ENCODE measurements at regions of chr1 and their contacts with region 1.

Region 1: GRCh38 chr1:201481761-201482493 is 12.9 kb upstream of the PHLDA3 start:
- DNase-seq: peak; percentile 97
- ATAC-seq: peak; percentile 72
- H3K4me3 Mint-ChIP-seq: peak overlapping the region; percentile 84
- H3K27ac Mint-ChIP-seq: no peak overlapping the region
- H3K4me1 Mint-ChIP-seq: peaks cover 29% of the 10 kb centered on the region
- H3K27me3 Mint-ChIP-seq: peaks cover 4% of the 10 kb centered on the region
- CTCF ChIP-seq: peak; percentile 88

Region 2: GRCh38 chr1:201361652-201362504 is 120.0 kb before region 1 on chr1:
- CTCF ChIA-PET with region 1: interaction called, 11 read pairs
- POLR2A ChIA-PET with region 1: no interaction called
- DNase-seq: peak; percentile 85
- ATAC-seq: peak; percentile 89
- H3K4me3 Mint-ChIP-seq: no peak overlapping the region
- H3K27ac Mint-ChIP-seq: no peak overlapping the region
- H3K4me1 Mint-ChIP-seq: peaks cover 18% of the 10 kb centered on the region
- H3K27me3 Mint-ChIP-seq: peaks cover 3% of the 10 kb centered on the region; the same call in 1 of the 2 replicates
- CTCF ChIP-seq: peak; percentile 90

Region 3: DNA sequence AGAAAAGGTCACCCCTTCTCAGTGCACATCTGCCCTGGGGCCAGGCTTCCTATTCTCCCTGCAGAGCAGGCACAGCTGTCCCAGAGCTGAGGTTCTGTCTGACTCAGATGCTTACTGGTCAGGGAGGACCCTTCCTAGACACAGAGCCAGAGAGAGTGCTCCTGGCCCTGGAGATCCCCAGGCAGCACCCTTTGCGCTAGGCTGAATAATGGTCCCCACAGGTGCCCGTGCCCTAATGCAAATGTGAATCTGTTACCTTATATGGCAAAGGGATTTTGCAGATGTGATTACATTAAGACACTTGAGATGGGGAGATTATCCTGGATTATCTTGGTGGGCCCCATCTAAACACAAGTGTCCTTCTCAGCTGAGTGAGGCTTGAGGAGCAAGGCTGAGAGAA is 57.8 kb before region 1 on chr1:
- CTCF ChIA-PET with region 1: no interaction called
- POLR2A ChIA-PET with region 1: no interaction called
- DNase-seq: no peak
- ATAC-seq: no peak
- H3K4me3 Mint-ChIP-seq: no peak overlapping the region
- H3K27ac Mint-ChIP-seq: no peak overlapping the region
- H3K4me1 Mint-ChIP-seq: peaks cover 9% of the 10 kb centered on the region
- H3K27me3 Mint-ChIP-seq: no peaks in the 10 kb centered on the region
- CTCF ChIP-seq: no peak

Region 4: GRCh38 chr1:201436393-201436792 is 45.5 kb before region 1 on chr1:
- CTCF ChIA-PET with region 1: interaction called, 195 read pairs
- POLR2A ChIA-PET with region 1: interaction called, 10 read pairs
- DNase-seq: peak; percentile 72
- ATAC-seq: peak; percentile 97
- H3K4me3 Mint-ChIP-seq: no peak overlapping the region; the same call in 1 of the 2 replicates
- H3K27ac Mint-ChIP-seq: no peak overlapping the region; the same call in 1 of the 2 replicates
- H3K4me1 Mint-ChIP-seq: peaks cover 19% of the 10 kb centered on the region
- H3K27me3 Mint-ChIP-seq: no peaks in the 10 kb centered on the region; the same call in 1 of the 2 replicates
- CTCF ChIP-seq: no peak

Region 5: GRCh38 chr1:201468844-201469511 is 12.9 kb before region 1 on chr1 and contains the start of gene PHLDA3:
- CTCF ChIA-PET with region 1: interaction called, 73 read pairs
- POLR2A ChIA-PET with region 1: interaction called, 12 read pairs
- DNase-seq: peak; percentile 85
- ATAC-seq: peak; percentile 68
- H3K4me3 Mint-ChIP-seq: peak within 1 kb of the TSS; percentile 90
- H3K27ac Mint-ChIP-seq: no peak within 1 kb of the TSS; the same call in 1 of the 2 replicates
- H3K4me1 Mint-ChIP-seq: peaks cover 30% of the 10 kb centered on the region
- H3K27me3 Mint-ChIP-seq: peaks cover 40% of the 10 kb centered on the region
- CTCF ChIP-seq: no peak
- total RNA-seq, gene PHLDA3: 53.9 to 95.1 TPM (median 59.7 TPM) in 3 replicates

Region 6: DNA sequence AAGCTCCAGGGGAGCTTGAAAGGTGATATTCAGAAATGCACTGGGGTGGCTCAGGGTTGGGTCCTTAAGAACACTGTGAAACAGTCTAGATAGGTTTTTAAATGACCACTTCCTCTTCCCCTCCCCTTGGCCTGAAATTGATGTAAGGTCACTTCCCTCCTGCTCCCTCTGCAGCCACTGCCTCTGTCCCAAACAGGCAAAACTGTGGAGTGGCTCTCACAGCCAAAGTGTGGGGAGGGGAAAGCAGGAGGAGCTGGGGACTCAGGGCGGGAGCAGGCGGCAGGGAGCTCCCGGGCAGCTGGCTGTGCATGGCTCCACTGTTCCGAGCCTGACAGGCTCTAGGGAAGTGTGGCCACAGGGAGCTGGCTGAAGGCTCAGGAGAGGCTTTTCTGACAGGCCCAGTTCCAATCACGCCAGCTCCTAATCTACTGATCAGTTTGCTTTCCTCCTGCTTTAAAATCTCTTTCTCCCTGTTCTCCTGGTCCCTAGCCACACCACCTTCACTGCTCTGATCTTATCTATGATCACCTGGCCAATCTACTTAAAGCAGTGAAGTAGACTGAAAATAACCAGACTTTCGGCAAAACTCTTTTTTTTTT is 30.1 kb after region 1 on chr1:
- CTCF ChIA-PET with region 1: interaction called, 390 read pairs
- POLR2A ChIA-PET with region 1: interaction called, 36 read pairs
- DNase-seq: peak; percentile 69
- ATAC-seq: peak; percentile 81
- H3K4me3 Mint-ChIP-seq: 0 out of 2 replicates have a peak overlapping the region, but pooled peaks have one; percentile 29
- H3K27ac Mint-ChIP-seq: peak overlapping the region; percentile 78; the same call in 1 of the 2 replicates
- H3K4me1 Mint-ChIP-seq: peaks cover 25% of the 10 kb centered on the region
- H3K27me3 Mint-ChIP-seq: peaks cover 25% of the 10 kb centered on the region
- CTCF ChIP-seq: no peak

Region 7: DNA sequence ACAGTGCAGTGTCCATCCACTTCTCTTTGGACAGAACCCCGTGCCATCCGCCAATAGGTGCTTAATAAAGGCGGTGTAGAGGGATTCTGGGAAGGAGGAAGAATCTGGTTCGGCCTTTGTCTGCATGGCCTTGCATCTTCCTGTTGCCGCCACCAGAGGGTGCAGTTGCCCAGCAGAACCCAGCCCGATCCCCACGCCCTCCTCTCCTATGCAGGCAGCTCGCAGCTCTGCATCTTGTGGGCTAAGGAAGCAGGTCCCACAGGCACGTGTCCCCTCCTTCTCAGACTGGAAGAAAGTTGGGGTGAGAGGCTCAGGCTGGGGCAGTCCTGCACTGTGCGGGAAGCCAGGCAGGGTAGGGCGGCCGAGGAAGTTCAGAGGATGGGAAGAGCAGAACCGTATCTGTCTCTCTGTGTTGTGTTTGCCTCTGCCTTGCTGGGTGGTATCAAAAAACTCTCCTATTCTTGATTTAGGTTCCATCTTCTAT is 77.8 kb after region 1 on chr1:
- CTCF ChIA-PET with region 1: interaction called, 23 read pairs
- POLR2A ChIA-PET with region 1: interaction called, 3 read pairs
- DNase-seq: peak; percentile 86
- ATAC-seq: peak; percentile 96
- H3K4me3 Mint-ChIP-seq: no peak overlapping the region
- H3K27ac Mint-ChIP-seq: no peak overlapping the region
- H3K4me1 Mint-ChIP-seq: peaks cover 17% of the 10 kb centered on the region
- H3K27me3 Mint-ChIP-seq: peaks cover 9% of the 10 kb centered on the region
- CTCF ChIP-seq: peak; percentile 91

Measured in WTC11 (cell line).